Calu3 (cell line): ENCODE measurements at regions of chr19 and their contacts with region 1.

Region 1: GRCh38 chr19:34336781-34337271 is 28.2 kb upstream of the GPI start:
- DNase-seq: peak; percentile 36
- H3K4me3 Mint-ChIP-seq: no peak overlapping the region
- H3K27ac Mint-ChIP-seq: no peak overlapping the region
- H3K4me1 Mint-ChIP-seq: peaks cover 7% of the 10 kb centered on the region
- H3K27me3 Mint-ChIP-seq: no peaks in the 10 kb centered on the region
- CTCF ChIP-seq: peak; percentile 68

Region 2: DNA sequence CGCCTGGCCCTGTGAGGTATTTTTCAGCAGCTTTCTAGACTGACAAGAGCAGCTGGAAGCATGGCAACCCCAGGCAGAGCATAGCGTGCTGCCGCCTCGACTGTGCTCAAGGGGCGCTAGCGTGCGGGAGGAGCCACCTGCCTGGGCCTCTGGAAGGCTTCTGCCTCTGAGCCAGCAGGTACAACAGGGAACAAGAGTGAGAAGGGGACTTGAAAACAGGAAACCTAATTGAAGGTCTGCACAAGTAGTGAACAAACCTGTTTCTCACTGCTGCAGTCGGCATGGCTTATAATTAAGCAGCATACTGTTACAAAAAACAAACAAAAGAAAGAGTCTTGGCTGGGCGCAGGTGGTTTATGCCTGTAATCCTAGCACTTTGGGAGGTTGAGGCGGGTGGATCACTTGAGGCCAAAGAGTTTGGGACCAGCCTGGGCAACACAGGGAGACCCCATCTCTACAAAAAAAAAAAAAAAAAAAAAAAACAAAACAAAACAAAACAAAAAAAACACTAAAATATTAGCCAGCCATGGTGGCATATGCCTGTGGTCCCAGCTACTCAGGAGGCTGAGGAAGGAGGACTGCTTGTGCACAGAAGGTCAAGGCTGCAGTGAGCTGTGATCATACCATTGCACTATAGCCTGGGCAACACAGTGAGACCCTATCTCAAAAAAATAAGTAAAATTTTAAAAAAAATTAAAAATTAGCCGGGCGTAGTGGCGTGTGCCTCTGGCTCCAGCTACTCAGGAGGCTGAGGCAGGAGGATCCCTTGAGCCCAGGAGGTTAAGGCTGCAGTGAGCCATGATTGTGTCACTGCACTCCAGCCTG is 95.1 kb before region 1 on chr19:
- CTCF ChIA-PET with region 1: interaction called, 5 read pairs
- intact Hi-C with region 1: loop called (anchors 1 kb)
- DNase-seq: peak; percentile 92
- H3K4me3 Mint-ChIP-seq: no peak overlapping the region
- H3K27ac Mint-ChIP-seq: peak overlapping the region; percentile 29
- H3K4me1 Mint-ChIP-seq: peaks cover 9% of the 10 kb centered on the region
- H3K27me3 Mint-ChIP-seq: no peaks in the 10 kb centered on the region
- CTCF ChIP-seq: peak; percentile 86

Region 3: DNA sequence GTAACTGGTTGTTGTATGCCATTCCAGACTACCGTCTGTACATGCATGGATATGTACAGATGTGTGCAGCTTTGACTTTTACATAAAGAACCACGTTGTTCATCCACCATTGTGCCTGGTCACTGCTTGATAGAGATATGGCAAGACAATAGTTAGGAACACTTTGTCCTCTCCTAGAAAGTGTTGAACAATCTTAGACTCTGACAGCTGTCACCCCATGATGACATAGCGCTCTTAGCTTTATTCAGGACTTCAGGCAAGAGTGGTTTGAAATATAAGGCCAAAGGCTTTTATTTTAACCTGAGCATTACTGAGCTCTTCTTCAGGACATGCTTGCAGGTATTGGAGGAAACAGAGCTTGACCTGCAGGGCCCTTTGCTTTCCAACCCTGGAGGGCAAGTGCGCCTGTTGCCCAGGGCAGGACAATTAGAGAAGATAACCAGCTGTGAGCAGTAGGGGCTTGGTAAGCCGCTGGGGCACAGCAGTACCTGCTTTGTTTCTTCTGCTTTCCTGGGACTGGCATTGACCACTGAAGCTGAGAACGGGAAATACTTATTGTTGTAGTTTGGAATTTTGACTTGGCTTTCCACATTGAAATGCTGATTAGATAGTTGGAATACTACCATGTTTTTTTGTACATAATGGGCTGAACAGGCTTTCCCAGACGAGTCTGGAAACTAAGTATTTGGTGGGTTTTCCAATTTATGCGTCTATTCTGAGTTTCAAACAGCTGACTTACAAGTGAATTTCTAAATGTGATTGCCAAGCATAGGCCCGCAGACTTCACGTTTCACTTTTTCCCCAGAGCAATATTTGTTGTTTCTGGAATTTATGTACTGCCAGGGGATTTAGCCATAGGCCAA is 31.4 kb before region 1 on chr19:
- CTCF ChIA-PET with region 1: no interaction called
- intact Hi-C with region 1: no loop called
- DNase-seq: no peak
- H3K4me3 Mint-ChIP-seq: no peak overlapping the region
- H3K27ac Mint-ChIP-seq: no peak overlapping the region
- H3K4me1 Mint-ChIP-seq: peaks cover 23% of the 10 kb centered on the region
- H3K27me3 Mint-ChIP-seq: no peaks in the 10 kb centered on the region
- CTCF ChIP-seq: no peak

Region 4: GRCh38 chr19:34317311-34317927 is 19.4 kb before region 1 on chr19:
- CTCF ChIA-PET with region 1: interaction called, 10 read pairs
- intact Hi-C with region 1: no loop called
- DNase-seq: no peak
- H3K4me3 Mint-ChIP-seq: no peak overlapping the region
- H3K27ac Mint-ChIP-seq: no peak overlapping the region
- H3K4me1 Mint-ChIP-seq: peaks cover 38% of the 10 kb centered on the region
- H3K27me3 Mint-ChIP-seq: no peaks in the 10 kb centered on the region
- CTCF ChIP-seq: no peak